Natural killer cell (primary cell): ENCODE measurements at regions of chr6 and their contacts with region 1.

Region 1: DNA sequence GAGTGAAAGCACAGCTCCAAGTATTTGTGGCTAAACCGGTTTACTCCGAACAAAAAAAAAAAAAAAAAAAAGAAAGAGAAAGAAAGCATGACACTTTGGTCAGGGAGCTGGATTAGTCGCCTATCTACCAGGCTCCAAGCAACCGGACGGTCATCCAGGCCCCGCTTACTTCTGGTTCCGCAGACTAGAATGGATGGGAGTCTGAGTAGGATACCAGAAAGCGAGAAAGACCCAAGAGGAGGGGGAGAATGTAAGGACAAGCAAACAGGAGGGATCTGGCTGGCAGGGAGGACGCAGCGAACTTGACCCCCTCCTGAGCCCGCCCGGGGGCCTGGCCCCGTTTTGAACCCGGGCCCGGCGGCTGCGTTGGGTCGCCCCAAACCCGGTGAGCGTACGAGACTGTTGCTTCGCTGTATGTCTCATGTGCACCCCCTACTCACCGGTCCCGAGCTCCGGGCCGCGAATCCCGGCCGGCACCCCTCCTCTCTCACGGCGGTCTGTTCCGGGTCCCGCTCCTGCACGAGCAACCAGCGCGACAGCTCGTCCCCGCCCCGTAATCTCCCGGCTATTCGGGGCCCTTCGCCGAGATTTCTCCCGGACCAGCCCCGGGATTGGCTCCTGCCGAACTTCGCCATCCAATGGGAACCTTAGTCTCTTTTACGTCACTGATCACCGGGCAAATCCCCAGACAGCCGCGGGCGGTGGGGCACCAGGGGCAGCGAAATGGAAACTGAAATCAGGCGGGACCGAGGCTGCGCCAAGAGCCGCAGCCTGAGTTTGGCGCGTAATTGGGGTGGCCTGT is at the start of gene TRIM26:
- DNase-seq: peak; percentile 95 to 98
- ATAC-seq: peak; percentile 83 to 92 (median 88)
- H3K4me3 ChIP-seq: peak within 1 kb of the TSS; percentile 93
- H3K4me3 Mint-ChIP-seq: peak within 1 kb of the TSS; percentile 97
- H3K27ac ChIP-seq: peak within 1 kb of the TSS; percentile 97
- H3K27ac Mint-ChIP-seq: peak within 1 kb of the TSS; percentile 99 to 100
- H3K4me1 ChIP-seq: peaks cover 17% of the 10 kb centered on the region
- H3K4me1 Mint-ChIP-seq: peaks cover 61 to 71% of the 10 kb centered on the region in 2 donors
- H3K27me3 ChIP-seq: no peaks in the 10 kb centered on the region
- H3K27me3 Mint-ChIP-seq: no peaks in the 10 kb centered on the region
- CTCF ChIP-seq: no peak
- total RNA-seq, gene TRIM26: 69.3 to 73.7 (median 71.6) TPM

Region 2: GRCh38 chr6:30259140-30260035 is 46.3 kb after region 1 on chr6:
- intact Hi-C with region 1: loop called (anchors 2 kb)
- DNase-seq: peak; percentile 51 to 90
- ATAC-seq: peak; percentile 75 to 83 (median 78)
- H3K4me3 ChIP-seq: peak overlapping the region; percentile 78
- H3K4me3 Mint-ChIP-seq: peak overlapping the region; percentile 88
- H3K27ac ChIP-seq: peak overlapping the region; percentile 72
- H3K27ac Mint-ChIP-seq: peak overlapping the region; percentile 12 to 84
- H3K4me1 ChIP-seq: peaks cover 22% of the 10 kb centered on the region
- H3K4me1 Mint-ChIP-seq: peaks cover 17 to 31% of the 10 kb centered on the region in 2 donors
- H3K27me3 ChIP-seq: no peaks in the 10 kb centered on the region
- H3K27me3 Mint-ChIP-seq: peaks cover 3 to 26% of the 10 kb centered on the region in 2 donors
- CTCF ChIP-seq: no peak

Region 3: GRCh38 chr6:30326526-30327260 is 113.6 kb after region 1 on chr6 and contains the start of gene TRIM39:
- intact Hi-C with region 1: loop called (anchors 1 kb)
- DNase-seq: peak; percentile 87 to 96
- ATAC-seq: peak; percentile 55 to 78 (median 64)
- H3K4me3 ChIP-seq: peak within 1 kb of the TSS; percentile 88
- H3K4me3 Mint-ChIP-seq: peak within 1 kb of the TSS; percentile 99
- H3K27ac ChIP-seq: peak within 1 kb of the TSS; percentile 85
- H3K27ac Mint-ChIP-seq: peak within 1 kb of the TSS; percentile 98 to 99
- H3K4me1 ChIP-seq: peaks cover 37% of the 10 kb centered on the region
- H3K4me1 Mint-ChIP-seq: peaks cover 43 to 59% of the 10 kb centered on the region in 2 donors
- H3K27me3 ChIP-seq: no peaks in the 10 kb centered on the region
- H3K27me3 Mint-ChIP-seq: no peaks in the 10 kb centered on the region
- CTCF ChIP-seq: no peak
- total RNA-seq, gene TRIM39: 32.1 to 40.1 (median 38.5) TPM

Region 4: DNA sequence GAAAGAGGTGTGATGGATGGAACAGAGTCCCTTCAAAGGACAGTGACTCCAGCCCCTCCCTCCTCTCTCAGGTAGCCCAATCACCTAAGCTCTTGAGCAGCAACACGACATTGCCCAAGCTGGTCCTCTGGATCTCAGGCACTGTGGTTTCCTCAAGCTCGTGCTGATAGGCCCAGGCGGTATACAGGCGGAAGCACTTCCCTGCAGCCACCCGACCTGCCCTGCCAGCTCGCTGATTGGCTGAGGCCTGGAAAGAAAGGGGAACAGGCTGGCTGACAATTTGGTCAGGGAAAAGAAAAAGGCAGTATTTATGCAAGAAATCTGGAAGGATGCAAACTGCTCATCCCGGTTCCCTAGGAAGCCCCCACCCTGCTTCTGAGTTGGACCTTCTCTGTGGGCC is 443.4 kb after region 1 on chr6:
- intact Hi-C with region 1: no loop called
- DNase-seq: no peak
- ATAC-seq: no peak
- H3K4me3 ChIP-seq: no peak overlapping the region
- H3K4me3 Mint-ChIP-seq: no peak overlapping the region
- H3K27ac ChIP-seq: no peak overlapping the region
- H3K27ac Mint-ChIP-seq: no peak overlapping the region
- H3K4me1 ChIP-seq: no peaks in the 10 kb centered on the region
- H3K4me1 Mint-ChIP-seq: no peaks in the 10 kb centered on the region
- H3K27me3 ChIP-seq: no peaks in the 10 kb centered on the region
- H3K27me3 Mint-ChIP-seq: no peaks in the 10 kb centered on the region
- CTCF ChIP-seq: no peak